ENCODE measurements at regions of chr22 and their contacts with region 1.

Region 1: GRCh38 chr22:17084554-17085276 is at the start of gene IL17RA:
- DNase-seq: peak; percentile 95
- ATAC-seq: peak; percentile 99
- total RNA-seq, gene IL17RA: 10.9 TPM

Region 2: GRCh38 chr22:17121227-17122195 is 36.8 kb after region 1 on chr22 and contains the start of gene TMEM121B:
- intact Hi-C with region 1: loop called (anchors 5 kb)
- DNase-seq: peak; percentile 91
- ATAC-seq: peak; percentile 79
- total RNA-seq, gene TMEM121B: 2.2 TPM

Measured in Right ventricle myocardium inferior (tissue), 1 donor.